ENCODE measurements at regions of chr2 and their contacts with region 1.

Region 1: GRCh38 chr2:159637971-159638501 is 21.7 kb upstream of the BAZ2B start:
- DNase-seq: no peak
- H3K4me3 ChIP-seq: no peak overlapping the region
- H3K27ac ChIP-seq: no peak overlapping the region
- H3K27me3 ChIP-seq: no peaks in the 10 kb centered on the region
- CTCF ChIP-seq: no peak

Region 2: GRCh38 chr2:159409116-159409800 is 228.8 kb before region 1 on chr2:
- intact Hi-C with region 1: no loop called
- DNase-seq: no peak
- H3K4me3 ChIP-seq: no peak overlapping the region
- H3K27ac ChIP-seq: no peak overlapping the region
- H3K27me3 ChIP-seq: no peaks in the 10 kb centered on the region
- CTCF ChIP-seq: no peak

Region 3: DNA sequence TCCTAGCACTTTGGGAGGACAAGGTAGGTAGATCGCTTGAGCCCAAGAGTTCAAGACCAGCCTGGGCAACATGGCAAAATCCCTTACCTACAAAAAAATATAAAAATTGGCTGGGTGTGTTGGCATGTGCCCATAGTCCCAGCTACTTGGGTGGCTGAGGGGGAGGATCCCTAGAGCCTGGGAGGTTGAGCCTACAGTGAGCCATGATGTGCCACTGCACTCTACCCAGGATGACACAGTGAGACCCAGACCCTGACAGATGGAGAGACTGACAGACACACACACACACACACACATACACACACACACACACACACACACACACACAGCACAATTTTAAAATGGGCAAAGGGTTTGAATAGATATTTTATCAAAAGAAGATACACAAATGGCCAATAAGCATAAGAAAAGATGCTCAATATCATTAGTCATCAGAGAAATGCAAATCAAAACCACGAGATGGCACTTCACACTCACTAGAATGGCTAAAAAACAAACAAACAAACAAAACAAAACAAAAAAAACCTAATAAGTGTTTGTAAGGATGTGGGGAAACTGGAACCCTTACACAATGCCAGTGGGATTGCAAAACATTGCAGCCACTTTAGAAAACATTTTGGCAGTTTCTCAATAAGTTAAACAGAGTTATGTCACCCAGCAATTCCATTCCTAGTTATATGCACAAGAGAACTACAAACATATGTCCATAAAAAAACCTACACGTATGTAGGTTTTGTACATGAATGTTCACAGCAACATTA is 64.0 kb before region 1 on chr2:
- intact Hi-C with region 1: no loop called
- DNase-seq: no peak
- H3K4me3 ChIP-seq: no peak overlapping the region
- H3K27ac ChIP-seq: no peak overlapping the region
- H3K27me3 ChIP-seq: no peaks in the 10 kb centered on the region
- CTCF ChIP-seq: no peak

Region 4: DNA sequence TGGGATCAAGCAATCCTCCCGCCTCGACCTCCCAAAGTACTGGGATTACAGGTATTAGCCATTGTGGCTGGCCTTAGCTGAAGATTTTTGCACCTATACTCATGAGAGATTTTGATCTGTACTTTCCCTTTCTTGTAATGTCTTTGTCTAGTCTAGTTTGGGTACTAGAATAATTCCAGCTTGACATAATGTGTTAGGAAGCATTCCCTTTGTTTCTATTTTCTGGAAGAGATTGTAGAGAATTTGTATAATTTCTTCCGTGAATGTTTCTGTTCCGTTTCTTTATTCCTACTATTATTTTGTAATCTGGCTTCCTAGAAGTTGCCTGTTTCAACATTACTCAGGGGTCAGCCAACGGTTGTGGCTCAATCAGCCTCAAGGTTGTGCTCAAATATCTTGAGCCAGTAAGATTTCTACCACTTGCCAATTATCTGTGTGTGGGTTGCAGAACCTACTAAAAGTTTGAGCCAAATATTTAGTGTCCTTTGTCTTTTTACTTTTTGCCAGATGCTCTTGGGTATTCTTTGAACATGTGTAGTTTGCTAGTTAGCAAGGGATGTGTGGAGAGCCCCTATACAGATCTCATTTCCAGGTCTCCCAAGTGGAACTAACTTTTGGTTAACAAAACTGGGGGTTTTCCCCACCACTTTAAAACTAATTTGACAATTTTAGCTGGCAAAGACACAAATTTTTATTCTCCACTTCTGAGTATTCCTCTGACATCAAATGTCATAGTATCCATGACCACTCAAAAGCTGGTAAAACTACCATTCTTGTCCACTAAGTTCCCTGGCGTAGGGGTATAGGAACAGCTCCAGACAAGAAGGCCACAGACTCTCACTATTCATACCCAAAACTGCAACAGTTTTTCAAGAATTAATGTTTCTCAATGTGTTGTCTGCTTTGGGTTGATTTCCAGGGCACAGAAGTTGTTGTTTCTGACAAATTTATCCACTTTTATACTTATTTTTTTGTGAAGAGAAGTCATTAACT is 21.1 kb after region 1 on chr2:
- intact Hi-C with region 1: no loop called
- DNase-seq: no peak
- H3K4me3 ChIP-seq: no peak overlapping the region
- H3K27ac ChIP-seq: no peak overlapping the region
- H3K27me3 ChIP-seq: no peaks in the 10 kb centered on the region
- CTCF ChIP-seq: no peak

Region 5: DNA sequence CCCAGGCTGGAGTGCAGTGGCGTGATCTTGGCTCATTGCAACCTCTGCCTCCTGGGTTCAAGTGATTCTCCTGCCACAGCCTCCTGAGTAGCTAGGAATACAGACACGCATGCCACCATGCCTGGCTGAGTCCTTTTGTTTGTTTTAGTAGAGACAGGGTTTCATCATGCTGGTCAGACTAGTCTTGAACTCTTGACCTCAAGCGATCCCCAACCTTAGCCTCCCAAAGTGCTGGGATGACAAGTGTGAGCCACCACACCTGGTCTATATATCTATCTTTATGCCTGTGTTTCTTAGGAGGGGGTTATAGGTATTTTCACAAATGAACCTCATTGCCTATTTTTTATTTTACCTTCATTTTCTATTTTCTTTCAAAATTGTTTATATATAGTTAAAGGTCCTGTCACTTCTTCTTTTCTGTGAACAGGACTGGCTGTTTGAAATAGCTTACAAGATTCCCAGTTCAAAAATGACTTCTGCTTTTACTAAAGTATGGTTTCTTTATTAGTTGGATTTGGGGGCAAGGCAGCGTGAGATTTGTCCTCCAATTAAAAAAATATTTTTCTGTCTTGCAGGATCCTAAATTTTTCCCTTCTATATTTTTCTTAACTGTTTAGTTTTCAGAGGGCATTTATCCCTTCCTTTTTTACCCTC is 57.9 kb after region 1 on chr2:
- intact Hi-C with region 1: loop called in 1 of 2 experiments (anchors 2 kb)
- DNase-seq: no peak
- H3K4me3 ChIP-seq: no peak overlapping the region
- H3K27ac ChIP-seq: no peak overlapping the region
- H3K27me3 ChIP-seq: no peaks in the 10 kb centered on the region
- CTCF ChIP-seq: no peak

Region 6: DNA sequence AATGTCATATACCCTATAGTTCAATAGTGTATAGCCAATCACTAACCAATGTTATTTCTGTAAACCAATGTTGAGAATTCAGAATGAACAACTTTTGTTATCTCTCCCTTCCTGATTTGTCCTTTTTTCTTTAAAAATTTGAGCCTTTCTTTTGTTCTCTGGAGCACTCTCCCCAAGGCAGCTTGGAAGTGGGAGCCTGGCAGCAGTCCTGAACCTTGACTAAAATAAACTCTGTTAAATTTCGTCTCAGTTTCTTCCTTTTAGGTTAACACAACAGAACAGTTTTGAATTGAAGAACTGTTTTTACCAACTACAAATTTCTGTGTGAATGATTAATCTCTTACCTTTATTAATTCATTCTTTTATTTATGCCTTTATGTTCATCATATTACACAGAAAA is 124.0 kb after region 1 on chr2:
- intact Hi-C with region 1: no loop called
- DNase-seq: no peak
- H3K4me3 ChIP-seq: no peak overlapping the region
- H3K27ac ChIP-seq: peak overlapping the region in 20 of 59 donors; percentile 5 to 63 (median 33)
- H3K27me3 ChIP-seq: no peaks in the 10 kb centered on the region
- CTCF ChIP-seq: no peak